ENCODE measurements at regions of chr10 and their contacts with region 1.

Region 1: DNA sequence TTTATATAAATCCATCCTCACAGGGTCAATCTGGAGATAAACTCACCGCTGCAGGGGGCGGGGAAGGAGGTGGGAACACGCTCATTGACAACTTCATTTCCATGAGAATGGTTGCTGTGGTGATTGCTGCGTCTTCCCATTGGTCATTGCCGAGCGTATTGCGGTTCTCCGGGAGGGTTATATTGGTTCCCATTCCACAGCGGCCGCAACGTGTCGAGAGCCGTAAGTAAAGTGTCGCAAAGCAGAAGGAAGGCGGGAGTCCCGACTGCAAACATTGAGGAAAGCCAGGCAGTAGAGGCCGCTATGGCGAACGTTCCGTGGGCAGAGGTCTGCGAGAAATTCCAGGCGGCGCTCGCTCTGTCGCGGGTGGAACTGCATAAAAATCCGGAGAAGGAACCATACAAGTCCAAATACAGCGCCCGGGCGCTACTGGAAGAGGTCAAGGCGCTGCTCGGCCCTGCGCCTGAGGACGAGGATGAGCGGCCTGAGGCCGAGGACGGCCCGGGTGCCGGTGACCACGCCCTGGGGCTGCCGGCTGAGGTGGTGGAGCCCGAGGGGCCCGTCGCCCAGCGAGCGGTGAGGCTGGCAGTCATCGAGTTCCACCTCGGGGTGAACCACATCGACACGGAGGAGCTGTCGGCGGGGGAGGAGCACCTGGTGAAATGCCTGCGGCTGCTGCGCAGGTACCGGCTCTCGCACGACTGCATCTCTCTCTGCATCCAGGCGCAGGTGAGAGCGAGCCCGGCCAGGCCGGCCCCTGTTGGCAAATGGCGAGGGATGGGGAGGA is at the start of gene KIFBP:
- DNase-seq: peak; percentile 98
- H3K4me3 ChIP-seq: peak within 1 kb of the TSS; percentile 75 to 97 (median 80)
- H3K27ac ChIP-seq: peak within 1 kb of the TSS; percentile 84 to 89 (median 88)
- H3K4me1 ChIP-seq: peaks cover 44 to 55% (median 50%) of the 10 kb centered on the region in 4 donors
- H3K27me3 ChIP-seq: no peaks in the 10 kb centered on the region
- CTCF ChIP-seq: peak; percentile 39 to 52 (median 52)
- EP300 ChIP-seq: no peak
- POLR2A ChIP-seq: peak; percentile 32
- total RNA-seq, gene KIFBP: 29.1 to 46.8 (median 38.2) TPM

Region 2: DNA sequence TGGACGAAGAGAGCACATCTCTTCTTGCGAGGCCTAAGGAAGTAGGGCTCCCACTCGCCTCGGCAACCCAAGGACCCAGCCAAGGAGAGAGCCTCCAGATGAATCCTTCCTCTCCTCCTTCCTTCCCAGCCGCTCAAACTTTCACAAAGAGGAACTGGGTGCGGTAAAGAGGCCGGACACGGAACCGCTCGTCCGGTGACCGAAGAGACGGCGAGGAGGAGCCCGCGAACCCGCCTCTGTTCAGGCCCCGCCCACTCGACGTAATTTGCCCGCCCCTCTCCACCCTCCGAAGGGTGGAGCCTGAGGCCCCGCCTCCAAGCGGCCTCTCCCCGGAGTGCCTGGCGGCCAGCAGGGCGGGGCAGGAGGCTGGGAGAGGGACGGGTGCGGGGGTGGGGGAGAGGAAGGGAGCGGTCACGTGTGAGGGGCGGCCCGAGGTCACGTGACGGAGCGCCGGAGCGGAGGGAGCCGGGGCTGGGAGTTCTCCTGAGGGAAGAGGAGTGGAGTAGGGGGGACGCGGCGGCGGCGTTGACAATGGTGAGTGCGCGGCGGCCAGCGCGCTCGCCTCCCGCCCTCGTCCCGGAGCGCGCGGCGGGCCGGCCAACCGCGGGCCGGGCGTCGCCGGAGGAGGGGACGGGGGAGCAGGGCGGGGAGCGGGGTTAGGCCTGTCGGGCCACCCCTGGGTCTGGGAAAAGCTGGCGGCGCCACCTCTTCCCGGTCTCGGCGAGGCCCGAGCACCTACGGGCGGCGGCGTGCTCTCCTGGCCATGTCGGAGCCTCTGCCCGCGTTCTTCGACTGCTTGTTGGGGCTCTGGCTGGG is 135.2 kb after region 1 on chr10 and contains the start of gene VPS26A:
- intact Hi-C with region 1: loop called (anchors 5 kb)
- DNase-seq: peak; percentile 99
- H3K4me3 ChIP-seq: peak within 1 kb of the TSS; percentile 89 to 99 (median 94)
- H3K27ac ChIP-seq: peak within 1 kb of the TSS; percentile 95 to 99 (median 98)
- H3K4me1 ChIP-seq: peaks cover 20 to 45% (median 29%) of the 10 kb centered on the region in 4 donors
- H3K27me3 ChIP-seq: no peaks in the 10 kb centered on the region
- CTCF ChIP-seq: peak; percentile 15 to 28 (median 24)
- EP300 ChIP-seq: no peak
- POLR2A ChIP-seq: peak; percentile 85
- total RNA-seq, gene VPS26A: 31.8 to 47.3 (median 38.4) TPM

Region 3: GRCh38 chr10:69179743-69180524 is 191.2 kb after region 1 on chr10 and contains the start of gene SUPV3L1:
- intact Hi-C with region 1: loop called (anchors 10 kb)
- DNase-seq: peak; percentile 97
- H3K4me3 ChIP-seq: peak within 1 kb of the TSS; percentile 75 to 97 (median 84)
- H3K27ac ChIP-seq: peak within 1 kb of the TSS; percentile 82 to 92 (median 87)
- H3K4me1 ChIP-seq: peaks cover 31 to 38% (median 33%) of the 10 kb centered on the region in 4 donors
- H3K27me3 ChIP-seq: no peaks in the 10 kb centered on the region
- CTCF ChIP-seq: peak in 1 of 3 experiments; percentile 19
- EP300 ChIP-seq: no peak
- POLR2A ChIP-seq: peak; percentile 81
- total RNA-seq, gene SUPV3L1: 15.4 to 21.9 (median 20.4) TPM

Measured in esophagus muscularis mucosa (tissue), 4 donors.